ENCODE measurements at regions of chr4 and their contacts with region 1.

Region 1: DNA sequence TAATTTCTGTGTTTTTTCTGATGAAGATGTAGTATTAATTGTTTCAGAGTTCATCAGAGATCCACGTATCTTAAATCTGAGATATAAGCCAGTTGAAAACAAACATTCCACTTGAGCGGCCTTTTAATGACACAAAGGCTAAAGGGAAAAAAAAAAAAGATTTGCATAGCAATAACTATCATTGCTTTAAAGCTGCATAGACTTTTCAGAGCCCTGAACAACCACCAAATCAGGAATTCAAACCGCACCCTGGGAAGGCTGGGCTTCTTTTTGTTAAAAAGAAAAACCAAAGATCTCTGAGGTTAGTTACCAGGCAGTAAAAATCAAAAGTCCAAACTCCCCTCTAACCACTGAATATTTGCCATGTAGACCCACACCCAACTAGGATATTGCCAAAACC is 206.0 kb downstream of the HHIP start:
- DNase-seq: no peak
- ATAC-seq: no peak

Region 2: GRCh38 chr4:142974328-142974727 is 1877.6 kb before region 1 on chr4:
- intact Hi-C with region 1: no loop called
- DNase-seq: no peak
- ATAC-seq: no peak

Region 3: DNA sequence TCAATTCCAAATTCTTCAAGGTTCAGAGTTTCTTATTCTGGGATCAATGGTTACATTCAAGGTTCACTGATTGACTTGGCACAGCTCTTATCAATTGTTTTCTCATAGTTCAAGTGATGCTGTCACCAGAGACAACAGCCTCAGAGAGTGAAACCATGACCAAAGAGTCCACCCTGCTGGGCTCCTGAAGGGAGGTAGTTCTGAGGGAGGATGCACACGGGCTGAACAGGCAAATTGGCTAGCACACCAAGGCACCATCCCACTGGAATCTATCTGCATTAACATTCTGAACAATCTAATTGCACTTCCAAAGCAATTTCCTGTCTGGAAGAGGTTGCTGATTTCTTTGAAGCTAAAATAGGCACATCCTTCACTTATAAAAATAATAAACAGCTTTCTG is 1531.8 kb before region 1 on chr4:
- intact Hi-C with region 1: loop called (anchors 5 kb)
- DNase-seq: no peak
- ATAC-seq: peak; percentile 50

Region 4: GRCh38 chr4:144591401-144591800 is 260.5 kb before region 1 on chr4:
- intact Hi-C with region 1: no loop called
- DNase-seq: no peak
- ATAC-seq: no peak